HEK293 (cell line): ENCODE measurements at regions of chr15 and their contacts with region 1.

Region 1: DNA sequence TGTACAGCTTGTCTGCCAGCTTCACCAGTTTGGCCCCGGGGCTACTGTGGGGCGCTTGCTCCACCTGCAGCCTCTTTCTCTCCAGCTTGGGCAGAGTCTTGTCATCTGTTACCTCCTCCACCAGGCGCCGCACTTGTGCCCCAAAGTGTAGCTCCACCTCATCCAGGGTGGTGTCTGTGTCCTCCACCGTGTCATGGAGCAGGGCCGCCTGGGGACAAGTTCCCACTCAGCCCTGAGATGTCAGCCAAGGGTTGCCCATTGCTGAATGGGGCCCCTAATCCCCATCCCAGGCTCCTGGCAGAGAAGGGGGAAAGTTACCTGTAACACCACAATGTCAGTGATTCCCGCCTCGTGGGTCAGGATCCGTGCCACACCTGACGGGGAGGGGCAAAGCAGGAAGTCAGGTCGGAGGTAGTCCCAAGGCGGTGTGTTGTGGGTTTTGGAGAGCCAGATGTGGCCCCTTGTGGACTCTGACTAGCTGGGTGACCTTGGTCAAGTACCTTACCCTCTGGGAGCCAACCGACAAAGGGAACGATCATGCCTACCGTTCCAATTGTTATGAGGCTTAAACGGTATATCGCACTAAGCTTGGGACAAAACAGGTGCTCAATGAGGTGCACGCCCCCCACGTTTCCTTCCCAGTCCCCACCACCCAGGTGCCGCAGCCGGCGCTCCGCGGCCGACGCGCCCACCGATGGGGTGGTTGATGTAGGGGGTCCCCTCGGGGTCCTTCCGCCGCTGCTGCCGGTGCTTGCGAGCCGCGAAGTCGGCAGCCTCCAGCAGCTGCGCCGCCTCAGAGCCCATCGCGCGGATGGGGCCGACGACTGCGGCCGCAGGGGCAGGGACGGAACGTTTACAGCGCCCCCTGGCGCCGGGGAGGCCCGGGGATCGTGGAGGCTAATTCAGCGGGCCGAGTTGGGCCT is at the start of gene HDDC3:
- H3K4me3 ChIP-seq: peak within 1 kb of the TSS; percentile 87
- H3K27ac ChIP-seq: peak within 1 kb of the TSS; percentile 93
- H3K4me1 ChIP-seq: 0 out of 2 replicates have a peak, but pooled peaks cover 2% of the 10 kb centered on the region
- CTCF ChIP-seq: peak; percentile 96

Region 2: DNA sequence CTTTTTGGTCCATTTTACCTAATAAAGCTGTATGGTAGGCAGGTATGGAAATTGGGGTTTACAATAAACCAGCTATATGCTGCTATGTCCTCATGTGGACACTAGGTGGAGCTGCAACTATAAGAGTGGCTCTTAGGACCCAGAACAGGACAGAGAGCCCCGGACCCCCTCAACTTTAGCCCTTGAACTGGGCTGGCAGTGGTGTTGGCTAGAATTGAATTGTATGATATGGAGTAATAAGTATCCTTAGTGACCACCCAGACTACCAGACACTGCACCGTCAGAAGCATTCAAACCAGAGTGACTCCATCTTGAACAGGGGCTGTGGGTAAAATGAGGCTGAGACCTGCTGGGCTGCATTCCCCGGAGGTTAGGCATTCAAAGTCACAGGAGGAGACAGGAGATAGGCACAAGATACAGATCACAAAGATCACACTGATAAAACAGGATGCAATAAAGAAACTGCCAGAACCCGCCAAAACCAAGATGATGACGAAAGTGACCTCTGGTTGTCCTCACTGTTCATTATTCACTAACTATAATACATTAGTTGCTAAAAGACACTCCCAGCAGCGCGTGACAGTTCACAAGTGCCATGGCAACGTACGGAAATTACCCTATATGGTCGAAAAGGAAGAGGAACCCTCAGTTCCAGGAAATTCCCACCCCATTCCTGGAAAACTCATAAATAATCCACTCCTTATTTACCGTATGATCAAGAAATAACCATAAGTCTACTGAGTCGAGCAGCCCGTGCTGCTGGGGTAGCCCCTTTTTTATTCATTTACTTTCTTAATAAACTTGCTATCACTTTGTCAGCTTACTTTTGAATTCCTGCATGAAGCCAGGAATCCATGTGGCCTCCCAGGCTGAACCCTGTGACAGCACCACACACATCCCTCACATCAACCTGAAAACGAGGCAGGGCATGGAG is 283.6 kb before region 1 on chr15:
- CTCF ChIA-PET with region 1: interaction called, 20 read pairs
- POLR2A ChIA-PET with region 1: interaction called, 3 read pairs
- H3K4me3 ChIP-seq: no peak overlapping the region
- H3K27ac ChIP-seq: no peak overlapping the region
- H3K4me1 ChIP-seq: no peaks in the 10 kb centered on the region
- CTCF ChIP-seq: peak; percentile 62; the same call in 1 of the 2 replicates

Region 3: GRCh38 chr15:90665288-90666134 is 266.5 kb before region 1 on chr15:
- CTCF ChIA-PET with region 1: no interaction called
- POLR2A ChIA-PET with region 1: no interaction called
- H3K4me3 ChIP-seq: peak overlapping the region; percentile 56
- H3K27ac ChIP-seq: peak overlapping the region; percentile 89
- H3K4me1 ChIP-seq: no peaks in the 10 kb centered on the region
- CTCF ChIP-seq: no peak

Region 4: DNA sequence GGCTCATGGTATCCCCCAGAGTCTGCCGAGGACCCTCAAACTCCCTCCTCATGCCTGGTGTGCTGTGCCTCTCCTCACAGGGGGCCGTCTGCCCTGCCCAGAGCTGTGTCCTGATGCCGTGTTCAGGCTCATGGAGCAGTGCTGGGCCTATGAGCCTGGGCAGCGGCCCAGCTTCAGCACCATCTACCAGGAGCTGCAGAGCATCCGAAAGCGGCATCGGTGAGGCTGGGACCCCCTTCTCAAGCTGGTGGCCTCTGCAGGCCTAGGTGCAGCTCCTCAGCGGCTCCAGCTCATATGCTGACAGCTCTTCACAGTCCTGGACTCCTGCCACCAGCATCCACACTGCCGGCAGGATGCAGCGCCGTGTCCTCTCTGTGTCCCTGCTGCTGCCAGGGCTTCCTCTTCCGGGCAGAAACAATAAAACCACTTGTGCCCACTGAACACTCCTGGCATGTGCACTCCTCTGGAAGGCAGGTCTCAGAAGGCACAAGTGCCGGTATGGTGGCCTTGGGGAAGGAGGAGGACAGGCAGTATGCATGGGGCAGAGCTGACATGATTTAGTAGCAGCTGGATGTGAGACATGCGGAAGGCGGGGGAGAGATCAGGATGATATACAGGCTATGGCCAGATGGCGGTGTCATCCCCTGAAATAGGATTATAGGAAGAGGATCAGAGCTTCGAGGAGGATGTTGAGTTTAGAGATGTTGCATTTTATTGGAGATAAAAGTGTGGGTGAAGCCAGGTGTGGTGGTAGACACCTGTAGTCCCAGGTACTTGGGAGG is 36.5 kb before region 1 on chr15:
- CTCF ChIA-PET with region 1: interaction called, 126 read pairs
- POLR2A ChIA-PET with region 1: interaction called, 6 read pairs
- H3K4me3 ChIP-seq: no peak overlapping the region
- H3K27ac ChIP-seq: no peak overlapping the region
- H3K4me1 ChIP-seq: no peaks in the 10 kb centered on the region
- CTCF ChIP-seq: peak; percentile 19; the same call in 1 of the 2 replicates

Region 5: GRCh38 chr15:90946538-90946937 is 14.5 kb after region 1 on chr15:
- CTCF ChIA-PET with region 1: interaction called, 163 read pairs
- POLR2A ChIA-PET with region 1: interaction called, 179 read pairs
- H3K4me3 ChIP-seq: no peak overlapping the region
- H3K27ac ChIP-seq: no peak overlapping the region
- H3K4me1 ChIP-seq: no peaks in the 10 kb centered on the region
- CTCF ChIP-seq: no peak

Region 6: GRCh38 chr15:91022075-91022835 is 90.3 kb after region 1 on chr15 and contains the start of gene VPS33B:
- CTCF ChIA-PET with region 1: interaction called, 37 read pairs
- POLR2A ChIA-PET with region 1: interaction called, 15 read pairs
- H3K4me3 ChIP-seq: peak within 1 kb of the TSS; percentile 74
- H3K27ac ChIP-seq: peak within 1 kb of the TSS; percentile 61
- H3K4me1 ChIP-seq: peaks cover 6% of the 10 kb centered on the region; the same call in 1 of the 2 replicates
- CTCF ChIP-seq: peak; percentile 47; the same call in 1 of the 2 replicates

Region 7: GRCh38 chr15:91049378-91050127 is 117.6 kb after region 1 on chr15:
- CTCF ChIA-PET with region 1: interaction called, 23 read pairs
- POLR2A ChIA-PET with region 1: no interaction called
- H3K4me3 ChIP-seq: no peak overlapping the region
- H3K27ac ChIP-seq: no peak overlapping the region
- H3K4me1 ChIP-seq: no peaks in the 10 kb centered on the region
- CTCF ChIP-seq: peak; percentile 69